ENCODE measurements at regions of chr2 and their contacts with region 1.

Region 1: GRCh38 chr2:29295857-29296256 is 180.6 kb downstream of the CLIP4 start:
- DNase-seq: peak; percentile 61
- ATAC-seq: peak; percentile 82
- H3K4me3 ChIP-seq: no peak overlapping the region
- H3K27ac ChIP-seq: no peak overlapping the region
- H3K4me1 ChIP-seq: no peaks in the 10 kb centered on the region
- H3K27me3 ChIP-seq: 0 out of 2 replicates have a peak, but pooled peaks cover 10% of the 10 kb centered on the region
- CTCF ChIP-seq: peak; percentile 78

Region 2: DNA sequence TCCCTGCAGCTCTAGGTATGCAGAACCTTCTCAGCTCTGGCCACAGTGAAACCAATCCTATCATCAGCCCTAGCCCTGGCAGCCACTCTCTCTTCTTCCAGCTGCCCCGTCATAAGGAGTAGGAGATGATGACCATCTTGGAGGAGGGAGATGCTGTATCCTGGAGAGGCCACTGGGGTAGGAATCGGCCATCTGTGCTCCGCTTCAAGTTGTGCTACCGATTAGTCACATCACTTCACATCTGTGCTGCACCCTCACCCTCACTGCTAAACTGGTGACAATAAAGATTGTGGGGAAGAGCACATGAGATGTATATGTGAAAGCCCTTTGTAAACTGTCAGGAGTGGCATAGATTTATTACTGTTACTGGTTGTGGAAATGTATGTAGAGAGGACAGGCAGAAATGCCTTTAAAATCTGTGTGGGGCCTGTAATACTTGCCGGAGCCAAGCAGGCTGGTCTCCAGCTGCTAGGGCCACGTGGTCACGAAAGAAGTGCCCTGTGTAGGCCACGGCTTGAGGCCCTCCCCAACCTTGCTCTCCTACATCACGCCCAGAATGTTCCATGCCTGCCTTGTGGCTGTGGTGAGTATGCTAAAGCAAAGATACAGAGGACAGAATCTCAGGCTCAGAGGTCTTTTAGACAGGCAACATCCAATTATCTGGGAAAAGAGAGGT is 56.2 kb after region 1 on chr2:
- CTCF ChIA-PET with region 1: no interaction called
- POLR2A ChIA-PET with region 1: no interaction called
- intact Hi-C with region 1: no loop called
- DNase-seq: no peak
- ATAC-seq: no peak
- H3K4me3 ChIP-seq: no peak overlapping the region
- H3K27ac ChIP-seq: no peak overlapping the region
- H3K4me1 ChIP-seq: no peaks in the 10 kb centered on the region
- H3K27me3 ChIP-seq: no peaks in the 10 kb centered on the region
- CTCF ChIP-seq: no peak

Region 3: DNA sequence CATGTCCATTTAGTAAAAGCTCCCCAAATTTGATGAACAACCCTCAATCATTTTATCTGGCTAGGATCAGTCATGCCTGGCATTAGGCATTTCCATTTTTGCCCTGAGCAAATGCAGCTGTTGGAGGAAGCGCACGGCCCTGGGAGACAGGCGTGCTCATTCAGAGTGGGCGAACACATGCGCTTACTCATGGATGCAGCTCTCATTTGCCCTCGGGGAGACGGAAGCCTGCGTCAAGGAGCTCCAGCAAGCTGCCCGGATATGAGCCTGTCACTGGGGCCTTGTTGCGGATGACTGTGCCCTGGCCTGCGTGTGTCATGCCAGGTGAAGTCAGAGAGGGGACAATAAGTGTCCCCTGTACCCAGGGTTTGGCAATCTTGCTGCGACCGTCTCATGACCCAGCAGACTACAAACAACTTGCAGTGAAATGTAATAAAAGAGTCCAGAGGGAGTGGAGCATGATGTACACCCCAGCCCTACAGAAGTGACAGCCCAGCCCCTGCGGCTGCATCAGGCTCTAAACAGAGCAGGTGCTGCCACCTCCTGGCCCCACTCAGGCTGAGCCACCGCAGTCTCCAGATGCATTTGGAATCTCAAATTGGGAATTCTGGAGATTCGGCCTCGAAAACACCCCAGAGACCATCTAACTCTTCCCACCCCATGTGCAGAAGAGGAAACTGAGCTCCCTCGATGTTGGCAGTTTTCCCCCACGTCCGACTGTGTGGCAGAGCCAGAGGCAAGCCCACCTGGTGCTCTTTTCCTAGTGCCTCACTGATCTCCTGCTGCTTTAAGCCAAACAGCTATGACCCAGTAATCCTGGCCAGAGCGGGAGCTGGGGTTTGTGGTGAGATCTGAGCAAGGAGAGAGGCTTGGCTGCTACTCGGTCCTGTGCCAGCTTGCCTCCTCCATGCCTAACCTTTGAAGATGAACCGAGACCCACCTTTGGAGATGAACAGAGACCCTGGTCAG is 730.5 kb after region 1 on chr2:
- CTCF ChIA-PET with region 1: no interaction called
- POLR2A ChIA-PET with region 1: no interaction called
- intact Hi-C with region 1: loop called (anchors 1 kb)
- DNase-seq: peak; percentile 96
- ATAC-seq: peak; percentile 93
- H3K4me3 ChIP-seq: peak overlapping the region; percentile 19; the same call in 1 of the 2 replicates
- H3K27ac ChIP-seq: peak overlapping the region; percentile 77
- H3K4me1 ChIP-seq: peaks cover 33% of the 10 kb centered on the region
- H3K27me3 ChIP-seq: no peaks in the 10 kb centered on the region
- CTCF ChIP-seq: peak; percentile 94